Activated T-helper 1 cell treated with anti-CD3 and anti-CD28 coated beads, Interleukin-12 subunit alpha, Interleukin-12 subunit beta, Interleukin-2, Interleukin-4 antibody, amounts not matched to agents 30 ng/mL and 10 ng/mL and 1 ng/mL, durations not matched to agents 14 hours and 24 hours and 36 hours (primary cell): ENCODE measurements at regions of chr15 and their contacts with region 1.

Region 1: GRCh38 chr15:51162865-51163762 is 68.4 kb upstream of the TNFAIP8L3 start:
- DNase-seq: peak; percentile 42
- H3K4me3 Mint-ChIP-seq: no peak overlapping the region
- H3K27ac Mint-ChIP-seq: no peak overlapping the region
- H3K4me1 Mint-ChIP-seq: peaks cover 10% of the 10 kb centered on the region
- H3K27me3 Mint-ChIP-seq: peaks cover 11% of the 10 kb centered on the region

Region 2: DNA sequence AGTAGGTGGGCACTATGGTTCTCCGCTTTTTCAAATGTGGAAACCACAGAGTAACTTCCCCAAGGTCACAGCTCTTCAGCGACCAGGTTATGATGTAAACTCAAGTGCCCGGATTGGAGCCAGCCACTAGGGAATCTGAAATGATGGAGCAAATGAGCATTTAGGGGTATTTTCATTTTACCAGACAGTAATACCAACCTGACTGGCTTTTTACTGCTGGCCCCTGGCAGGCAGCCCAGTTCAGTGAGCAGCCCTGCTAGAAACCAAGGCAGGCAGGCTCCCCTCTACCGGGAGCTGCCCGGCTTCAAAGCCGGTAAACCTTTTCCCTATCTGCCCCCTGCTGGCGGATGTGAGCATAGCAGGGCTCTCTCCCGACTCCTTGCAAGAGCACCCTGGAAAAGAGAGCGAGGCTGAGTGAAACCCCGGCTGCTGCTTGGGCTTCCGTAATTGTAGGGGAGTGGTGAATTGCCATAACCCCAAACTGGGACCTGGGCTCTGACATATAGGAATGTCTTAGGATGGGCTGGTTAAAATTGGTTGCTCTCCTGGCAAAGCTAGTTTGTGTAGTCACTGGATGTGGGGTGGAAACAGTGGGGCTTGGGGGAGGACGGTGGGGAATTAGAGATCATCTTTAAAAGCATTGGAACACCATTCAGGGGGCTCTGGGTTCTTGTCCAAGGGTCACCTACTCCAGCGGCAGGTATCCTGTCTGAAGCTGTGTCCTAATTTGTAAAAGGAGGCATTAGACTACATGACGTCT is 29.6 kb after region 1 on chr15:
- intact Hi-C with region 1: loop called (anchors 1 kb)
- DNase-seq: peak; percentile 54
- H3K4me3 Mint-ChIP-seq: no peak overlapping the region
- H3K27ac Mint-ChIP-seq: no peak overlapping the region
- H3K4me1 Mint-ChIP-seq: no peaks in the 10 kb centered on the region
- H3K27me3 Mint-ChIP-seq: peaks cover 33% of the 10 kb centered on the region

Region 3: GRCh38 chr15:51243759-51244158 is 80.6 kb after region 1 on chr15:
- intact Hi-C with region 1: no loop called
- DNase-seq: no peak
- H3K4me3 Mint-ChIP-seq: no peak overlapping the region
- H3K27ac Mint-ChIP-seq: peak overlapping the region; percentile 59
- H3K4me1 Mint-ChIP-seq: peaks cover 23% of the 10 kb centered on the region
- H3K27me3 Mint-ChIP-seq: peaks cover 2% of the 10 kb centered on the region

Region 4: DNA sequence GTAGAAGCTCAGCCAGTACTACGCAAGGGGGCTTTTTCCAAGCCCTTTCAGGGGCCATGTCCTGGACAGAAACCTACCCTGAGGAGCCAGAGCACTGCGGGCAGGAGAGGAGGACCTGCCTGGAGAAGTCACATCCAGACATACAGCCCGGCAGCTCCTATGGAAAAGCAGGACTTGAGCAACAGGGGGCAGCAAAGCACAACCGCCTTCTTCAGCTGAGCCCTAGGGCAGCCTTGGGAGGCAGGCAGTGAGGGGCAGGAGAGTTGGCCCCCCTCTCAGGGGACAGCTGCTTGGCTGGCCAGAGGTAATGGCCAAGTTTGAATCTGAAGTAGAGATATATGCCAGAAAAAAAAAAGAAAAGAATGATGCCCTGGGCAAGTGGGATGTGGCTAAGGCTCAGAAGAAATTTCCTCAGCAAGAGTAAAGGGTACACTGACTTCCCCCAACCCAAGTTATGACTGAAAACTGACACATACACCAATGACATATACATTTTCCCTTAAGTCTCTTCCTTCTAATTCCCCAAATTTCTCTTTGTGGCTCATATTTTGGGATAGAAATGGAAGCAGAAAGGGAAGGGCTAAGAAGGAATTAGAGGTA is 118.4 kb after region 1 on chr15:
- intact Hi-C with region 1: loop called (anchors 1 kb)
- DNase-seq: no peak
- H3K4me3 Mint-ChIP-seq: no peak overlapping the region
- H3K27ac Mint-ChIP-seq: no peak overlapping the region
- H3K4me1 Mint-ChIP-seq: peaks cover 15% of the 10 kb centered on the region
- H3K27me3 Mint-ChIP-seq: peaks cover 9% of the 10 kb centered on the region

Region 5: DNA sequence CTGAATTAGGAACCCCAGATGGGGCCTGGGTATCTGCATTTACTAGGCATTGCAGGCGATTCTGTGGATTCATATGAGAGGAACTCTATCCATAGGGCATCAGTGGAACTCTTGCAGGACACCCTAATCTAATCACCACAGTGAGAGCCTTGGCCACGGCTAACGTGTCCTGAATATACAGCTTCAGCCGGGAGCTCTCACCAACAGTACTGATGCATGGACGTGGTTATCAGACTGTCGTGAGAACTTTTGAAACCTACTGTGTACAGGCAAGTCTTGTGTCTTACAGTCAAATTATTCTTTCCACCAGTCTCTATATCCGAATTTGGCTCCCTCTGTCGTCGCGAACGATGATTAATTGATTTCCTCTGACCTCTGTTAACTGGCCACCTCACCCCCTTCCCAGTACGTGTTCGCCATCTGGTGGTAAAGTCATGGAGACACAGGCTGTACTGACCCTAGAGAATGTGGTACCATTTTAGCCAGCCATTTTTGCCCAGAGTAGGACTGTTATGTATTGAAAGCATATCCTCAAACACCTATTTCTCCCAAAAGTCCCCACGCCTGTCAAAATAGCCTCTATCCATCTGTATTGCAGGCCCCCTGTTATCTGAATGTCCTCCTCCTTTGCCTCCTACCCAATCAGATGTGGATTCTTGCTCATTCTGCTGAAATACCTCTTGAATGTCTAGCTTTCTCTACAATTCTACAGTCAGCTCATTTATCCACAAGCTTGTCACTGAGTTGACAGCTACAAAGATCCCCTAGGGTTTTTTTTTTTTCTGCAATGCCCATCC is 218.1 kb after region 1 on chr15:
- intact Hi-C with region 1: loop called (anchors 1 kb)
- DNase-seq: peak; percentile 2
- H3K4me3 Mint-ChIP-seq: no peak overlapping the region
- H3K27ac Mint-ChIP-seq: no peak overlapping the region
- H3K4me1 Mint-ChIP-seq: no peaks in the 10 kb centered on the region
- H3K27me3 Mint-ChIP-seq: peaks cover 3% of the 10 kb centered on the region

Region 6: GRCh38 chr15:51499379-51499976 is 336.4 kb after region 1 on chr15:
- intact Hi-C with region 1: loop called (anchors 1 kb)
- DNase-seq: no peak
- H3K4me3 Mint-ChIP-seq: no peak overlapping the region
- H3K27ac Mint-ChIP-seq: no peak overlapping the region
- H3K4me1 Mint-ChIP-seq: no peaks in the 10 kb centered on the region
- H3K27me3 Mint-ChIP-seq: no peaks in the 10 kb centered on the region